ENCODE measurements at regions of chr4 and their contacts with region 1.

Region 1: GRCh38 chr4:2262143-2262943 is 434 bp upstream of the MXD4 start:
- DNase-seq: peak; percentile 99
- ATAC-seq: peak; percentile 96
- H3K4me3 Mint-ChIP-seq: peak overlapping the region; percentile 61
- H3K27ac Mint-ChIP-seq: no peak overlapping the region
- H3K4me1 Mint-ChIP-seq: peaks cover 2% of the 10 kb centered on the region
- H3K27me3 Mint-ChIP-seq: no peaks in the 10 kb centered on the region

Region 2: GRCh38 chr4:2008875-2009703 is 253.3 kb before region 1 on chr4 and contains the start of gene NELFA:
- CTCF ChIA-PET with region 1: no interaction called
- POLR2A ChIA-PET with region 1: no interaction called
- intact Hi-C with region 1: loop called in 1 of 2 experiments (anchors 1 kb)
- DNase-seq: peak; percentile 97
- ATAC-seq: peak; percentile 81
- H3K4me3 Mint-ChIP-seq: peak within 1 kb of the TSS; percentile 87
- H3K27ac Mint-ChIP-seq: peak within 1 kb of the TSS; percentile 90
- H3K4me1 Mint-ChIP-seq: peaks cover 34% of the 10 kb centered on the region
- H3K27me3 Mint-ChIP-seq: no peaks in the 10 kb centered on the region
- total RNA-seq, gene NELFA: 41.6 to 48.3 TPM

Region 3: DNA sequence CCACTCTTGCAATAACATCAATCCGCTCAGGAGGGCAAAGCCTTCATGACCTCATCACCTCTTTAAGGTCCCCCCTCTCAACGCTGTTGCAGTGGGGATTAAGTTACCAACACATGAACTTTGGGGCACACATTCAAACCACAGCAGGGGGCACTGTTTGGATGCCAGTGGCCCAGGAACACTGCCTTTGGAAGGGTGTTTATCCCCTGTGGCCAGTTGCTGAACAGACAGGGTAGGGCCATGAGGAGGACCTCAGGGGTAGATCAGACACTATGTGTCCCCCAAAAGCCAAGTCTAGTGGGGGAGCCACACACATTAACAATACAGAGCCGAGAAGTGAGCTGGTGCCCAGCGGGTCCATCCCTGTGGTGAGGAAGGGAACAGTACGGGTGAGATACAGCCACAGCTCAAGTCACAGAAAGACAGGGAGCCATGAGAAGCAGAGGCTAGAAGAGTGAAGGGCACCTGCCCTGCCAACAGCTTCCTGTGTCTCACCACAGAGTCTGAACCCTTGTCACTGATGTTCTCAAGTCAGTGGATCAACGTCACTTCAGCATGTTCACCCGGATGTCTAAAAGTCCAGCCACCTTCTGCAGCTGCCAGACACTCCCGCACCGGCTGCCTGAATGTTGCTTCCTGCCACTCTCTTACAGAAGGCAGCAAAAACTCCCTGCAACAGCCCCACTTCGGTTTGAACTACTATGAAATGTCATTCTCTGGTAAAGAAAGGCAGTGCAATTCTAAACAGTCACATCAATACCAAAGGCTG is 19.4 kb after region 1 on chr4:
- CTCF ChIA-PET with region 1: interaction called, 3 read pairs
- POLR2A ChIA-PET with region 1: no interaction called
- intact Hi-C with region 1: loop called in 1 of 2 experiments (anchors 1 kb)
- DNase-seq: peak; percentile 83
- ATAC-seq: peak; percentile 96
- H3K4me3 Mint-ChIP-seq: no peak overlapping the region
- H3K27ac Mint-ChIP-seq: peak overlapping the region; percentile 82
- H3K4me1 Mint-ChIP-seq: peaks cover 34% of the 10 kb centered on the region
- H3K27me3 Mint-ChIP-seq: no peaks in the 10 kb centered on the region

Region 4: DNA sequence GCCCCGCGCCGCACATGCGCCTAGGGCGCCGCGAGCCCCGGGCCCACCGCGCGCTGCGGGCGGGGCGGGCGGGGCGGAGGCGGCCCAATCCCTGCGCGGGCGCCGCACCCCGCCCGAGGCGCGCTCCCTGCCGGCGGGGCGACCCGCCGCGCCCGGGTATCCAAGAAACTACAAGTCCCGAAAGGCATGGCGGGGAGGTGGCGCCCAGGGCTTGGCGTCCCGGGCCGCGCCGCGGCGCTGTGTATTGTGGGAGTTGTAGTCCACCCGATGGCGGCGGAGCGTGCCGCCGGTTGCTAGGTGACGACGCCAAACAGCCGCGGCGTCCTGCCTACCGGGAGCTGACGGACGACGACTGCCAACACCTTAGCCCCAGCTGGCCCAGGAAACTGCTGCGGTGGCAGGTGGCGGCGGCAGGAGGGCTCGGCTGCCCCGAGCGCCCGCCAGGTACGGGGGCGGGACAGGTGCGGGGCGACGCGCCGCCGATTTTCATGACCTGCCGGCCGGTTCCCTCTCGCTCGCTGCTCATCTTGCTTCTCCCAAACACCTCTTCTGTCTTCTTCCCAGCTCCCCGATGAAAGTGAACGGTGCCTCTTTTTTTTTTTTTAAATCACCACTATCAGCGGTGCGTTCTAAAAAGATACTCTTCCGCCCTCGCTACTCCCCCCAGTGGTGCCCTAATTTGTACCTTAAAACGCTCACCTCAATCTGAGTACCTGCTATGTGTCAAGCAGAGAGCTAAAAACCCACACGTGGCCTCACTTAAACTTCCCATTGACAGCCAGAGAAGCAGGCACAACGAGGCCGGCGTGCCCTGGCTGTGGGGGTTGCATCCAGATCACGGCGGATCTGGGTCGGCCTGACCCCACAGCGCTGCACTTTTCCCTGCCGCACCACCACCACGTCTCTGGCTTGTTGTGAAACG is 156.6 kb after region 1 on chr4 and contains the start of gene CFAP99:
- CTCF ChIA-PET with region 1: no interaction called
- POLR2A ChIA-PET with region 1: interaction called, 3 read pairs
- intact Hi-C with region 1: loop called in 1 of 2 experiments (anchors 1 kb)
- DNase-seq: peak; percentile 99
- ATAC-seq: peak; percentile 93
- H3K4me3 Mint-ChIP-seq: peak within 1 kb of the TSS; percentile 82
- H3K27ac Mint-ChIP-seq: peak within 1 kb of the TSS; percentile 68
- H3K4me1 Mint-ChIP-seq: peaks cover 39% of the 10 kb centered on the region
- H3K27me3 Mint-ChIP-seq: peaks cover 27% of the 10 kb centered on the region
- total RNA-seq, gene CFAP99: 0.05 TPM in 1 of 2 experiments, not detected in the other

Region 5: DNA sequence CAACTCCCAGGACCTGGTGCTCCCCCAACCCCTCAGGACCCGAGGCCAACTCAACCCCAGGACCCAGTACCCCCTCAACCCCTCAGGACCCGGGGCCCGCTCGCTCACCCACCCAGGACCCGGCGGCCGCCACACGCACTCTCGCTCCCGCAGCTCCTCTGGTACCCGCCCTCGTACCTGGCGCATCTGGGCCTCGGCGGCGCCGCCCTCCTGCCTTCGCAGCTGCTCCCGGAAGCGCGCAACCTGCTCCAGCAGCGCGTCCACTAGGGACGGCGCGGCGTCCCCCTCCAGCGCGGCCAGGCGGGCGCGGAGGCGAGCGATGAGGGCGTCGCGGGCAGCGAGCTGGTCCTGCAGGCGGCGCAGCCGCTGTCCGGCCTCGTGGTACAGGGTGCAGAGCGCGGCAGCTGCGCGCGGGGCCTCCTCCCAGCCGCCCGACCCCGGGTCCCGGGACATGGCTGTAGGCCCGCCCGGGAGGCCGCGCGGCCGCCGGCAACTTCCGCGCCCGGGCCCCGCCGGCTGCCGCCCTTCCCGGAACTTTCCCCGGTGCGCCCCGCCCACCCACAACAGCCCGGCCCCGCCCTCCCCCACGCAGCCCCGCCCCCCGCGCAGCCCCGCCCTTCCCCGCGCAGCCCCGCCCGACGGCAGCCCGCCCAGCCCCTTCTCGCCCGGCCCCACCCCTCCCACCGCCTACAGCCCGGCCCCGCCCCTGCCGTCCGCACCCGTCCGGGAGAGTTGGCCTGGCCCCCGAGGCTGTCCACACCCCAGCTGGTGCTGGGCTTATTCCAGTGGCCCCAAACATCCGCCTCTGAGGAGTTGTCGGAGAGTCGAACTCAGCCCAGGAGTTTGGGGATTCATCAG is 493.7 kb after region 1 on chr4 and contains the start of gene TNIP2:
- CTCF ChIA-PET with region 1: no interaction called
- POLR2A ChIA-PET with region 1: no interaction called
- intact Hi-C with region 1: loop called in 1 of 2 experiments (anchors 1 kb)
- DNase-seq: peak; percentile 91
- ATAC-seq: peak; percentile 78
- H3K4me3 Mint-ChIP-seq: peak within 1 kb of the TSS; percentile 79
- H3K27ac Mint-ChIP-seq: peak within 1 kb of the TSS; percentile 66
- H3K4me1 Mint-ChIP-seq: peaks cover 33% of the 10 kb centered on the region
- H3K27me3 Mint-ChIP-seq: no peaks in the 10 kb centered on the region
- total RNA-seq, gene TNIP2: 50.6 to 59.4 TPM